Activated B cell treated with CpG ODN at 0.5 μM for 24 hours (primary cell): ENCODE measurements at regions of chr16 and their contacts with region 1.

Region 1: GRCh38 chr16:54477714-54478113 is 191.1 kb upstream of the IRX3 start:
- DNase-seq: no peak
- ATAC-seq: no peak
- H3K4me3 Mint-ChIP-seq: no peak overlapping the region
- H3K27ac Mint-ChIP-seq: no peak overlapping the region
- H3K4me1 Mint-ChIP-seq: no peaks in the 10 kb centered on the region
- H3K27me3 Mint-ChIP-seq: no peaks in the 10 kb centered on the region
- CTCF ChIP-seq: no peak

Region 2: DNA sequence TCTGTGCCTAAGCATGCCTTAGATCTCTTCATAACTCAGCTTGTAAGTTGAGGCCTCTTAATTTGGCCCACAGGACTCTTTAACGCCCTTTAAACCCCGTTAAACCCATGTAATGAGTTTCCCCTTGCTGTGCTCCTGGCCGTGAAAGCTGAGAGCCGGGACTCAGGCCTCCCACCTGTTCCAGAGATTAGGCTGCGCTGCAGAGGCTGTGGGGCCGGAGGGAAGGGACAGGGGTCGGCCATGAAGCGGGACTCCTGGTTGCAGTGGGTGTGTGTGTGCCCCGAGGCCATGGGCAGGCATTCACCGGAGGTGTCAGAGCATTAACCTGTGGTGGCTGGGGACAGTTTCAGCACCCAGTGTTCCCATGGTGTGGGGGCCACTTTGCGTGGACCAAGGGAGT is 40.3 kb before region 1 on chr16:
- CTCF ChIA-PET with region 1: no interaction called
- POLR2A ChIA-PET with region 1: no interaction called
- intact Hi-C with region 1: no loop called
- DNase-seq: no peak
- ATAC-seq: no peak
- H3K4me3 Mint-ChIP-seq: no peak overlapping the region
- H3K27ac Mint-ChIP-seq: no peak overlapping the region
- H3K4me1 Mint-ChIP-seq: no peaks in the 10 kb centered on the region
- H3K27me3 Mint-ChIP-seq: peaks cover 7% of the 10 kb centered on the region
- CTCF ChIP-seq: no peak

Region 3: GRCh38 chr16:54503011-54503855 is 25.5 kb after region 1 on chr16:
- CTCF ChIA-PET with region 1: no interaction called
- POLR2A ChIA-PET with region 1: no interaction called
- intact Hi-C with region 1: no loop called
- DNase-seq: no peak
- ATAC-seq: no peak
- H3K4me3 Mint-ChIP-seq: no peak overlapping the region
- H3K27ac Mint-ChIP-seq: no peak overlapping the region
- H3K4me1 Mint-ChIP-seq: no peaks in the 10 kb centered on the region
- H3K27me3 Mint-ChIP-seq: peaks cover 3% of the 10 kb centered on the region
- CTCF ChIP-seq: no peak

Region 4: GRCh38 chr16:54517181-54517580 is 39.5 kb after region 1 on chr16:
- CTCF ChIA-PET with region 1: no interaction called
- POLR2A ChIA-PET with region 1: no interaction called
- intact Hi-C with region 1: no loop called
- DNase-seq: no peak
- ATAC-seq: no peak
- H3K4me3 Mint-ChIP-seq: no peak overlapping the region
- H3K27ac Mint-ChIP-seq: no peak overlapping the region
- H3K4me1 Mint-ChIP-seq: no peaks in the 10 kb centered on the region
- H3K27me3 Mint-ChIP-seq: no peaks in the 10 kb centered on the region
- CTCF ChIP-seq: no peak

Region 5: GRCh38 chr16:54546521-54546920 is 68.8 kb after region 1 on chr16:
- CTCF ChIA-PET with region 1: no interaction called
- POLR2A ChIA-PET with region 1: no interaction called
- intact Hi-C with region 1: loop called (anchors 2 kb)
- DNase-seq: no peak
- ATAC-seq: no peak
- H3K4me3 Mint-ChIP-seq: no peak overlapping the region
- H3K27ac Mint-ChIP-seq: no peak overlapping the region
- H3K4me1 Mint-ChIP-seq: no peaks in the 10 kb centered on the region
- H3K27me3 Mint-ChIP-seq: peaks cover 3% of the 10 kb centered on the region
- CTCF ChIP-seq: no peak